ENCODE measurements at regions of chr11 and their contacts with region 1.

Region 1: GRCh38 chr11:69888483-69889076 is 69.4 kb upstream of the FGF3 start:
- DNase-seq: peak; percentile 92
- ATAC-seq: peak; percentile 58
- H3K4me3 Mint-ChIP-seq: no peak overlapping the region
- H3K27ac Mint-ChIP-seq: no peak overlapping the region
- H3K4me1 Mint-ChIP-seq: peaks cover 35% of the 10 kb centered on the region
- H3K27me3 Mint-ChIP-seq: peaks cover 31% of the 10 kb centered on the region
- CTCF ChIP-seq: peak; percentile 95

Region 2: DNA sequence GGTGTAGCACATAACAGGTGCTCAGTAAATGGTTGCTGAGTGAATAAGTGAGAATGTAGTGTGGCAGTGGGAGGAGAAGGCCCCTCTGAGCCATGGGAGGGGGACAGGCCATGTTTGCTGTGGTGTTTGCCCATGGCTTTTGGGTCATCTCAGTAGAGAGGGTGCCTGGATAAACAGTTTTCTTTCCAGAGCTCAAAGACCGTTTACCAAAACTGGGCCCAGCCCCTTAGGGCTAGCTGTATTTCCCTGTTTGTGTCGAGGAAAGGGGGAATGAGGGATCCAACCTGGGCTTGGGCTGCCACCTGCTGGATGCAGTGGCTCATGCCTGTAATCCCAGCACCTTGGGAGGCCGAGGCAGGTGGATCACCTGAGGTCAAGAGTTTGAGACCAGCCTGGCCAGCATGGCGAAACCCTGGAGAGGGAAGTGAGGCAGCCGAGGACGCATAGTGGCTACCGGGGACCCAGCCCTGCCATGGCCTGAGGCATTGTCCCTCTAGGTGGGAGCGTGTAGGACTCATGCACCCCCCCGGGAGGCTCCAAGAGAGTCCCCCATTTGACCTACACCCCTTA is 204.7 kb before region 1 on chr11:
- CTCF ChIA-PET with region 1: interaction called, 16 read pairs
- POLR2A ChIA-PET with region 1: no interaction called
- DNase-seq: peak; percentile 75
- ATAC-seq: peak; percentile 69
- H3K4me3 Mint-ChIP-seq: no peak overlapping the region
- H3K27ac Mint-ChIP-seq: no peak overlapping the region
- H3K4me1 Mint-ChIP-seq: peaks cover 5% of the 10 kb centered on the region
- H3K27me3 Mint-ChIP-seq: peaks cover 10% of the 10 kb centered on the region
- CTCF ChIP-seq: peak; percentile 59

Region 3: DNA sequence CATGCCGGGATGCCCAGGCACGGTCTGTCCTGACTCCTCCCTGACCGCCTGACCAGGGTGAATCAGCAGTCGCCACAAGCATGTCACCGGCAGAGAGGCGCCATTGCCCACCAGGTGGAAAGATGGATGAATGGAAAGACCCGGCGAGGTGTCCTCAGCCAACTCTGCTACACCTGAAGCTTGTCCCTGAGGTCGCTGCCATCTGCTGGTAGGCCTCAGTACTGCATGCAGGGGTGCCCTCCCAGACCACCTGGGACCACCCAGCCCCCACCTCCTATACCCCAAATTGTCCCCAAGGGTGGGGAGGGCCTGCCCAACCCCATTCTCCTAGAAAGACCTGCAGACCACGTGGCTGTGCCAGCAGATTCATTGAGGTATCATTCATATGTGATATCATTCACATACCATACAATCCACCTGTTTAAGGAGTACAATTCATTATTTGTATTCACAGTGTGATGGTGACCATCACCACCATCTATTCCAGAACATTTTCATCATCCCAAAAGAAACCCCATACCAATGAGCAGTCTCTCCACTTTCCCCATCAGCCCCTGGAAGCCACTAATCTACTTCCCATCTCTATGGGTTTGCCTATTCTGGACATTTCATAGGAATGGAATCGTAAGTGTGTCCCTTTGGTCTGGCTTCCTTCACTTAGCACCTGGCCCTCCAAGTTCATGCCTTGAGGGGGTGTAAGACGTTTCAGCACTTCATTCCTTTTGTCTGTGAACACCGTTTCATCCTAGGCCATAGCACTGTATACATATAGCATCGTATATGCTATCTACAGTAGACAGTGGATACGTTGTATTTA is 86.9 kb before region 1 on chr11:
- CTCF ChIA-PET with region 1: interaction called, 10 read pairs
- POLR2A ChIA-PET with region 1: no interaction called
- DNase-seq: peak; percentile 95
- ATAC-seq: peak; percentile 83
- H3K4me3 Mint-ChIP-seq: no peak overlapping the region
- H3K27ac Mint-ChIP-seq: no peak overlapping the region
- H3K4me1 Mint-ChIP-seq: no peaks in the 10 kb centered on the region
- H3K27me3 Mint-ChIP-seq: no peaks in the 10 kb centered on the region; the same call in 1 of the 2 replicates
- CTCF ChIP-seq: peak; percentile 97

Region 4: GRCh38 chr11:69899957-69900821 is 11.6 kb after region 1 on chr11:
- CTCF ChIA-PET with region 1: interaction called, 74 read pairs
- POLR2A ChIA-PET with region 1: interaction called, 6 read pairs
- DNase-seq: no peak
- ATAC-seq: no peak
- H3K4me3 Mint-ChIP-seq: no peak overlapping the region
- H3K27ac Mint-ChIP-seq: no peak overlapping the region
- H3K4me1 Mint-ChIP-seq: no peaks in the 10 kb centered on the region; the same call in 1 of the 2 replicates
- H3K27me3 Mint-ChIP-seq: no peaks in the 10 kb centered on the region; the same call in 1 of the 2 replicates
- CTCF ChIP-seq: no peak

Region 5: GRCh38 chr11:69939551-69940245 is 51.1 kb after region 1 on chr11:
- CTCF ChIA-PET with region 1: no interaction called
- POLR2A ChIA-PET with region 1: no interaction called
- DNase-seq: peak; percentile 10
- ATAC-seq: no peak
- H3K4me3 Mint-ChIP-seq: no peak overlapping the region
- H3K27ac Mint-ChIP-seq: no peak overlapping the region
- H3K4me1 Mint-ChIP-seq: peaks cover 11% of the 10 kb centered on the region
- H3K27me3 Mint-ChIP-seq: peaks cover 5% of the 10 kb centered on the region; the same call in 1 of the 2 replicates
- CTCF ChIP-seq: no peak

Region 6: GRCh38 chr11:70135625-70136059 is 247.1 kb after region 1 on chr11:
- CTCF ChIA-PET with region 1: no interaction called
- POLR2A ChIA-PET with region 1: no interaction called
- DNase-seq: no peak
- ATAC-seq: no peak
- H3K4me3 Mint-ChIP-seq: no peak overlapping the region
- H3K27ac Mint-ChIP-seq: no peak overlapping the region
- H3K4me1 Mint-ChIP-seq: peaks cover 8% of the 10 kb centered on the region
- H3K27me3 Mint-ChIP-seq: peaks cover 7% of the 10 kb centered on the region
- CTCF ChIP-seq: no peak